ENCODE measurements at regions of chr15 and their contacts with region 1.

Region 1: GRCh38 chr15:48861813-48862431 is 16.0 kb upstream of the EID1 start:
- DNase-seq: peak in 1 of 10 donors; percentile 37

Region 2: GRCh38 chr15:48905847-48906246 is 43.9 kb after region 1 on chr15:
- intact Hi-C with region 1: no loop called
- DNase-seq: no peak

Region 3: GRCh38 chr15:49063397-49064280 is 201.7 kb after region 1 on chr15:
- intact Hi-C with region 1: no loop called
- DNase-seq: peak in 1 of 10 donors; percentile 43

Region 4: GRCh38 chr15:49145651-49146609 is 284.0 kb after region 1 on chr15:
- intact Hi-C with region 1: loop called (anchors 2 kb)
- DNase-seq: peak in 3 of 10 donors; percentile 15 to 47 (median 27)

Region 5: DNA sequence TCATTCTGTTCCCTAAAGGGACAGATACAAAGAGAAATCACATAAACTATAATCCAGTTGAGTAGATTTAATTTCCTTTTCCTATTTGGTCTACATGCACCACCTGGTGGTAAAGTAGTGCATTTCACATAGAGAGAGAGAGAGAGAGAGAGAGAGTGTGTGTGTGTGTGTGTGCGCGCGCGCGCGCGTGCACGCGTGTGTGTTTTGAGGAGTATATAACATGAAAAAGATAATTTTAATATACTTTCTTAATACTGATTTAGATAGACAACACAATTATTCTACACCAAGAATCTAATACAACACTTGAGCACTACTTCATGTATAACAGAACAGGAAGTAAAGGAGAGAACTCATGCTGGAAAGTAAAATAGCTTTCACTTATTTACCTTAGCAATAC is 560.1 kb after region 1 on chr15:
- intact Hi-C with region 1: loop called (anchors 5 kb)
- DNase-seq: peak in 4 of 10 donors; percentile 3 to 57 (median 16)

Region 6: DNA sequence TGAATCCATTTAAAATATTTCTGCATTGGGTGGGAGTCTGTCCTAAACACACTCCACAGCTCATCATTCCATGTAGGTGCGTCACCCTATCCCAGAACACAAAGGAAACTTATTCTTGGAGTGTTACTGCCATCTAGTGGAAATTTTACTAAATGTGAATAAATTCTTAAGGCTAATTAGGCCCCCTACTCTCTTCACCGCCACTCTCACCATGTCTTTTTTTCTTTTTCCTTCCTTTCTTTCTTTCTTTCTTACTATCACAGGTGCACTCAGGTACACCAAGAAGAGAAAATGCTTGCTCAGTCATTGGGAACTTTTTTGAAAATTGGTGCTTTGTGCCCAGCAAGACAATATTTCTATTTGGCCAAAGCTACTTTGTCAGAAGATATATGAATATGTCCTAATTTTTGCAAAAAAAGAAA is 1283.5 kb after region 1 on chr15:
- intact Hi-C with region 1: loop called (anchors 2 kb)
- DNase-seq: no peak

Measured in posterior cingulate gyrus (tissue), 11 donors.